ENCODE measurements at regions of chr4 and their contacts with region 1.

Region 1: DNA sequence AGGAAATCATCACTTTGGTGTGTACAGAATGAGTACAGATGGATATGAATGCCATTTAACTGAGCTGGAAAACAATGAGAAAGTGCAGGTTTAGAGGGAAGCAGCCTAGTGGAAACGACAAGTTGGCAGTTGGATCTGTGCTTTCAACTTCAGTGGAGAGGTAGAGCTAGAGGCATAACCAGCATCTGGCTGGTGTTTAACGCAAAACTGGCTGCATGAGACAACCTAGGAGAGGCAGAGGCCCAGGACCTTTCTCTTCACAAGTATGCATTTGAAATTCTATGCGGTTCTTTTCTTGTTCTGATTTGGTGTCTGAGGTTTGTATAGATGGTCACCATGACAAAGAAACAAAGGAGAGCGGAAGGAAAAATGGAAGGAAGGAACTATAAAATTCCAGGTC is 63.1 kb downstream of the ANXA5 start:
- DNase-seq: no peak
- H3K4me3 ChIP-seq: no peak overlapping the region
- H3K27ac ChIP-seq: no peak overlapping the region
- H3K4me1 ChIP-seq: no peaks in the 10 kb centered on the region
- H3K27me3 ChIP-seq: no peaks in the 10 kb centered on the region
- CTCF ChIP-seq: no peak

Region 2: GRCh38 chr4:121584836-121585235 is 48.8 kb before region 1 on chr4:
- CTCF ChIA-PET with region 1: no interaction called
- dilution Hi-C with region 1: no loop called
- in situ Hi-C with region 1: no loop called
- intact Hi-C with region 1: loop called (anchors 1 kb)
- DNase-seq: no peak
- H3K4me3 ChIP-seq: no peak overlapping the region
- H3K27ac ChIP-seq: no peak overlapping the region
- H3K4me1 ChIP-seq: no peaks in the 10 kb centered on the region
- H3K27me3 ChIP-seq: peaks cover 5% of the 10 kb centered on the region
- CTCF ChIP-seq: no peak